ENCODE measurements at regions of chr3 and their contacts with region 1.

Region 1: GRCh38 chr3:65245133-65246063 is 557.6 kb upstream of the ADAMTS9 start:
- DNase-seq: no peak
- ATAC-seq: no peak

Region 2: GRCh38 chr3:64533617-64534317 is 711.6 kb before region 1 on chr3:
- intact Hi-C with region 1: loop called (anchors 10 kb)
- DNase-seq: peak; percentile 89
- ATAC-seq: peak; percentile 97

Region 3: DNA sequence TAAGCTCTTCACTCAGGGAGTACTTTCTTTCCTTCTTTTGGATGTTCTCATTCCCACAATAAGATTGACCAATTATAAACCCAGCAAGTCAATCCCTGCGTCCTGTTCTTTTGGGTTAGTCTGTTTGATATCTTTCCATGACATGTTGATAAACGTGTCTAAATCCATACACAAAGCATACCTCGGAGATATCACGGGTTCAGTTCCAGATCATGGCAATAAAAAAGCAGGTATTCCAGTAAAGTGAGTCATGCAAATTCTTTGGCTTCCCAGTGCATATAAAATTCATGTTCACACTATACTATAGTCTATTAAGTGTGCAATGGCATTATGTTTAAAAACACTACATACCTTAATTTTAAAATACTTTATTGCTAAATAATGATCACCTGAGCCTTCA is 125.7 kb after region 1 on chr3:
- intact Hi-C with region 1: no loop called
- DNase-seq: no peak
- ATAC-seq: no peak